T-cell (primary cell): ENCODE measurements at regions of chr12 and their contacts with region 1.

Region 1: DNA sequence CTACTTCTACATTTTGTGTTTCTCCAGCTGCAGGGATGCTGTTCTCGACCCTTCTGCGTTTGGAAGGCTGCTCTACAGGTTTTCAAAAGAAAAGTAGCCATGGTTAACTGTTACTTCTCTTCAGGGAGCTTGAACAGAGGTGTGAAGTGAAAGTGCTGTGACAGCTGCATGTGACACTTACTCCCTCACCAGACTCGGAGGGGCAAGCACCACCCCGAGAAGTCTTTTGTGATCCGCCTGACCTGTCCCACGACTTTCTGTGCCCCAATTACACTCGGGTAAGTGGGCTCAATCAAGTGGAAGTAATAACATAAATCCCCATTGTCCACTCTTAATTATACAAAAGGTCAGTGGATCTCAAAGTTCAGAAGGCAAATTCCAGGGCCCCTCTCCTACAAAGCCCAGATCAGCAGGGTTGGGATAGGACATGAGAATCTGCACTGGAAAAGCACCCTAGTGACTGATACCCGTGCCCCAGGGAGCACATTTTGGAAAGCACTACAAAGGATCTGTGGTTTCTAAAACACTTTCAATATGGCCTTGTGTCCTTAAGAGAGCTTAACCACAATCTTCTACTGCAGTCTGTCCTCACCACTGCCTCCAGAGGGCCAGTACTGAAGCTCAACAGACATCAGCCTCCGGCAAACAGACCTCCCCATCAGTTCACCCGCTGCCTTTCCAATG is 11.5 kb downstream of the FICD start:
- DNase-seq: no peak
- ATAC-seq: no peak
- H3K4me3 ChIP-seq: no peak overlapping the region
- H3K4me3 Mint-ChIP-seq: no peak overlapping the region
- H3K27ac ChIP-seq: no peak overlapping the region
- H3K27ac Mint-ChIP-seq: peak overlapping the region in 1 of 2 donors; percentile 77
- H3K4me1 ChIP-seq: no peaks in the 10 kb centered on the region
- H3K4me1 Mint-ChIP-seq: peaks cover 0 to 5% (median 0%) of the 10 kb centered on the region in 3 donors
- H3K27me3 ChIP-seq: no peaks in the 10 kb centered on the region
- H3K27me3 Mint-ChIP-seq: no peaks in the 10 kb centered on the region

Region 2: GRCh38 chr12:108349278-108349688 is 177.3 kb before region 1 on chr12:
- CTCF ChIA-PET with region 1: no interaction called
- POLR2A ChIA-PET with region 1: no interaction called
- DNase-seq: no peak
- ATAC-seq: no peak
- H3K4me3 ChIP-seq: no peak overlapping the region
- H3K4me3 Mint-ChIP-seq: no peak overlapping the region
- H3K27ac ChIP-seq: no peak overlapping the region
- H3K27ac Mint-ChIP-seq: no peak overlapping the region
- H3K4me1 ChIP-seq: no peaks in the 10 kb centered on the region
- H3K4me1 Mint-ChIP-seq: no peaks in the 10 kb centered on the region
- H3K27me3 ChIP-seq: peaks cover 0 to 9% of the 10 kb centered on the region in 2 experiments
- H3K27me3 Mint-ChIP-seq: peaks cover 0 to 8% of the 10 kb centered on the region in 2 donors

Region 3: GRCh38 chr12:108547686-108548085 is 21.1 kb after region 1 on chr12:
- CTCF ChIA-PET with region 1: no interaction called
- POLR2A ChIA-PET with region 1: no interaction called
- DNase-seq: no peak
- ATAC-seq: no peak
- H3K4me3 ChIP-seq: no peak overlapping the region
- H3K4me3 Mint-ChIP-seq: no peak overlapping the region
- H3K27ac ChIP-seq: no peak overlapping the region
- H3K27ac Mint-ChIP-seq: no peak overlapping the region
- H3K4me1 ChIP-seq: peaks cover 0 to 2% of the 10 kb centered on the region in 2 experiments
- H3K4me1 Mint-ChIP-seq: peaks cover 40 to 45% (median 42%) of the 10 kb centered on the region in 3 donors
- H3K27me3 ChIP-seq: no peaks in the 10 kb centered on the region
- H3K27me3 Mint-ChIP-seq: no peaks in the 10 kb centered on the region

Region 4: GRCh38 chr12:108646600-108647579 is 120.3 kb after region 1 on chr12:
- CTCF ChIA-PET with region 1: no interaction called
- POLR2A ChIA-PET with region 1: interaction called in 1 of 2 experiments, 10 read pairs
- DNase-seq: peak in 1 of 35 experiments; percentile 38
- ATAC-seq: peak in 3 of 4 experiments; percentile 29 to 53 (median 36)
- H3K4me3 ChIP-seq: no peak overlapping the region
- H3K4me3 Mint-ChIP-seq: peak overlapping the region; percentile 18 to 70 (median 66)
- H3K27ac ChIP-seq: peak overlapping the region; percentile 38
- H3K27ac Mint-ChIP-seq: peak overlapping the region; percentile 86 to 91
- H3K4me1 ChIP-seq: peaks cover 15 to 30% of the 10 kb centered on the region in 2 experiments
- H3K4me1 Mint-ChIP-seq: peaks cover 27 to 37% (median 34%) of the 10 kb centered on the region in 3 donors
- H3K27me3 ChIP-seq: no peaks in the 10 kb centered on the region
- H3K27me3 Mint-ChIP-seq: no peaks in the 10 kb centered on the region